H1 (cell line): ENCODE measurements at regions of chr15 and their contacts with region 1.

Region 1: GRCh38 chr15:38440353-38441129 is 13.4 kb upstream of the FAM98B start:
- DNase-seq: peak; percentile 27 to 62
- H3K4me3 ChIP-seq: peak overlapping the region in 1 of 4 experiments; percentile 8; a peak in 1 of 8 replicates
- H3K27ac ChIP-seq: no peak overlapping the region
- H3K4me1 ChIP-seq: peaks cover 0 to 4% (median 3%) of the 10 kb centered on the region in 4 experiments; a peak in 3 of 7 replicates
- H3K27me3 ChIP-seq: no peaks in the 10 kb centered on the region
- CTCF ChIP-seq: peak; percentile 66 to 90 (median 80)
- EP300 ChIP-seq: peak in 1 of 2 experiments; percentile 44; a peak in 1 of 3 replicates
- POLR2A ChIP-seq: no peak
- RAD21 ChIP-seq: peak; percentile 82 to 91

Region 2: DNA sequence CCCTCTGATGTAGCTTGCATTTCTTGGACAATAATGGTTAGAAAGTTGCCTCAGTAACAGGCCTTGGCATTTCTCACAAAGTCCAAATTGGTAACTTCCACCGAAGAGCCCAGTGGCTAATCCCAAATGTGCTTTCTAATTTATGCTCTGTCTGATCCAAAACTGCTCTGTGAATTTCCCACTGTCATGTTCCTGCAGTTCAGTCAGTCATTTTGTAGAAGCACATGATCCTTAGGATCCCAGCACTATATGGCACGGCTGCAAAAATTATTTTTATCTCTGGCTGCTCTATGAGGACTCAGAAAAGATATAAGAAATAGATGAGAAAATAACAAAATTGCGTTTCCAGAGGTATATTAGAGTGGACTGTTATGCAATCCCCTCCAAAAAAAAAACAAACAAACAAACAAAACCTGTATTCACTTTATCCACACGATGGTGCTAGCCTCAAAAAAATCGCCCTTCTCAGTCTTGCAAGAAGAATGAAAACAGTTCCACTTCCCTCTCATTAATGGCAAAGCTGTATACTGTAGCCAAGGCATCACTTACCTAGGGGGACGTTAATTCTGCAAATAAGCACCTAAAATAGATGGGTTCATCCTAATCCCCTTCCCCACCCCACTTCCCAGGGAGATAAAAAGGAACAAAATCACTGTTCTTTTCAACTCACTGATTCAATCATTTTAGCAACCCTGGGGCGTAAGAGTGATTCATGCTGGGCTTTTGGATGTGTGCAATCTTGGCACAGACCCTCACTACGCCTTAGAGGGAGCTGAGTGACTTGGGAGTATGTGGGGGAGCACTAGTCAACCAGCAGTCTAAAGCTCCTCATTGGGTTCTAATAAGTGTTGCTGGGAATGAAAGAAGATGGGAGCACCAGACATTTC is 444.8 kb before region 1 on chr15:
- CTCF ChIA-PET with region 1: interaction called, 28 read pairs
- POLR2A ChIA-PET with region 1: no interaction called
- DNase-seq: no peak
- H3K4me3 ChIP-seq: no peak overlapping the region
- H3K27ac ChIP-seq: no peak overlapping the region
- H3K4me1 ChIP-seq: no peaks in the 10 kb centered on the region
- H3K27me3 ChIP-seq: no peaks in the 10 kb centered on the region
- CTCF ChIP-seq: peak in 2 of 3 experiments; percentile 59; a peak in 2 of 4 replicates
- EP300 ChIP-seq: no peak
- POLR2A ChIP-seq: no peak
- RAD21 ChIP-seq: peak; percentile 89 to 91

Region 3: GRCh38 chr15:38421069-38421690 is 19.4 kb before region 1 on chr15:
- CTCF ChIA-PET with region 1: interaction called, 27 read pairs
- POLR2A ChIA-PET with region 1: no interaction called
- DNase-seq: no peak
- H3K4me3 ChIP-seq: no peak overlapping the region
- H3K27ac ChIP-seq: no peak overlapping the region
- H3K4me1 ChIP-seq: no peaks in the 10 kb centered on the region
- H3K27me3 ChIP-seq: no peaks in the 10 kb centered on the region
- CTCF ChIP-seq: no peak
- EP300 ChIP-seq: no peak
- POLR2A ChIP-seq: no peak
- RAD21 ChIP-seq: no peak

Region 4: GRCh38 chr15:38453971-38454695 is 13.6 kb after region 1 on chr15 and contains the start of gene FAM98B:
- CTCF ChIA-PET with region 1: interaction called, 42 read pairs
- POLR2A ChIA-PET with region 1: interaction called, 34 read pairs
- DNase-seq: peak; percentile 64 to 99
- H3K4me3 ChIP-seq: peak within 1 kb of the TSS; percentile 70 to 98 (median 93)
- H3K27ac ChIP-seq: peak within 1 kb of the TSS; percentile 97
- H3K4me1 ChIP-seq: 0 out of 7 replicates have a peak, but pooled peaks cover 0 to 5% (median 0%) of the 10 kb centered on the region in 4 experiments
- H3K27me3 ChIP-seq: no peaks in the 10 kb centered on the region
- CTCF ChIP-seq: no peak
- EP300 ChIP-seq: peak in 1 of 2 experiments; percentile 48; a peak in 1 of 3 replicates
- POLR2A ChIP-seq: peak; percentile 87 to 98
- RAD21 ChIP-seq: peak in 1 of 2 experiments; percentile 8; a peak in 1 of 4 replicates
- total RNA-seq, gene FAM98B: 44.6 and 48.4 TPM in 2 replicates

Region 5: DNA sequence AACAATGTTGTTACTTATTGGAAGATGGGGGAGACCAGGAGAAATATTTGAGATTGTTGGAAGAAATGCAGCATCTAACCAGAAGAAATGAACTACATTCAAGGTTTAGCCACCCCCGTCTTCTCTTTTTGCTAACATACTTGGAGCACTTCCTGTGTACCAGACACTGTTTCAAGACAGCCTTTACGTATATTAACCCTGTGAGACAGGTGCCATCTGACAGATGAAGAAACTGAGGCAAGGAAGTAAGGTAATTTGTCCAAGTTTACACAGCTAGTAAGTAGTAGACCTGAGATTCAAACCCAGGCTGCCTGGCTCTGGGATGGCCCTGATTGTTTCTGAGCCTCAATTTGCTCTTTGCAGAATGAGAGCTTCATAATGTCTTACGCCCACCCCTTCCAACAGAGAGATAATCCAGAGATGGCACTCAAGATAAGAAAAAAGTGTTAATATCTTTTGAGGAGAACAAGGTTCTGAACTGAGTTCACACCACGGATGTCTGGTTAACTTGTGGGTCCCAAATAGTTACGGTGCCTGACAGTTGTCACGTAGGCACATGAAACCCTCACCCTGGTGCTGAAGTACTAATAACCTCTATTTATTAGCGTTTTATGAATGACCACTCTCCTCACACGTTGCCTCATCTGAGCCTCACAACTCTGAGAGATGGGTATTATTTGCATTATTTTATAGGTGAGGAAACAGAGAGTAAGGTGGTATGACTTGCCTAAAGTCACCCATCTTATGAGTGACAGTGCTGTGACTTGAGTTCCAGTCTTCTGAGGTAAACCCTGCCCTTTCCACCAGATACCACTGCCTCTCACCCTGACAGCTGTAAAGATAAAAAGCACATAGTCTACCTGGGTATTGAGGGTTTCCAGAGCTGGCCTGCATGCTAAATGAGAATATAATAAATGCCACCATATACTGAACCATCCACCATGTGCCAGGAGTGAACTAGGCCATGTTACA is 98.1 kb after region 1 on chr15:
- CTCF ChIA-PET with region 1: no interaction called
- POLR2A ChIA-PET with region 1: no interaction called
- DNase-seq: no peak
- H3K4me3 ChIP-seq: no peak overlapping the region
- H3K27ac ChIP-seq: no peak overlapping the region
- H3K4me1 ChIP-seq: peaks cover 0 to 3% (median 0%) of the 10 kb centered on the region in 4 experiments; a peak in 1 of 7 replicates
- H3K27me3 ChIP-seq: no peaks in the 10 kb centered on the region
- CTCF ChIP-seq: no peak
- EP300 ChIP-seq: no peak
- POLR2A ChIP-seq: no peak
- RAD21 ChIP-seq: no peak

Region 6: GRCh38 chr15:38665586-38666305 is 225.2 kb after region 1 on chr15:
- CTCF ChIA-PET with region 1: interaction called, 10 read pairs
- POLR2A ChIA-PET with region 1: no interaction called
- DNase-seq: no peak
- H3K4me3 ChIP-seq: no peak overlapping the region
- H3K27ac ChIP-seq: no peak overlapping the region
- H3K4me1 ChIP-seq: no peaks in the 10 kb centered on the region; a peak in 1 of 7 replicates
- H3K27me3 ChIP-seq: peaks cover 0 to 1% (median 0%) of the 10 kb centered on the region in 4 experiments; a peak in 1 of 7 replicates
- CTCF ChIP-seq: no peak
- EP300 ChIP-seq: no peak
- POLR2A ChIP-seq: no peak
- RAD21 ChIP-seq: no peak

Region 7: GRCh38 chr15:38690689-38691332 is 250.3 kb after region 1 on chr15:
- CTCF ChIA-PET with region 1: interaction called, 61 read pairs
- POLR2A ChIA-PET with region 1: no interaction called
- DNase-seq: peak; percentile 46 to 82
- H3K4me3 ChIP-seq: no peak overlapping the region
- H3K27ac ChIP-seq: no peak overlapping the region
- H3K4me1 ChIP-seq: peaks cover 0 to 4% (median 0%) of the 10 kb centered on the region in 4 experiments; a peak in 1 of 7 replicates
- H3K27me3 ChIP-seq: no peaks in the 10 kb centered on the region
- CTCF ChIP-seq: peak in 2 of 3 experiments; percentile 75 to 87; a peak in 3 of 4 replicates
- EP300 ChIP-seq: no peak
- POLR2A ChIP-seq: no peak
- RAD21 ChIP-seq: peak; percentile 70 to 76